Mucosa of descending colon (tissue), 3 donors: ENCODE measurements at regions of chr13 and their contacts with region 1.

Region 1: GRCh38 chr13:43567608-43568007 is 219.2 kb downstream of the ENOX1 start:
- DNase-seq: no peak
- ATAC-seq: no peak
- H3K4me3 ChIP-seq: no peak overlapping the region
- H3K4me1 ChIP-seq: no peaks in the 10 kb centered on the region
- CTCF ChIP-seq: no peak

Region 2: GRCh38 chr13:43258761-43259160 is 308.8 kb before region 1 on chr13:
- intact Hi-C with region 1: no loop called
- DNase-seq: no peak
- ATAC-seq: no peak
- H3K4me3 ChIP-seq: no peak overlapping the region
- H3K4me1 ChIP-seq: no peaks in the 10 kb centered on the region
- CTCF ChIP-seq: no peak

Region 3: DNA sequence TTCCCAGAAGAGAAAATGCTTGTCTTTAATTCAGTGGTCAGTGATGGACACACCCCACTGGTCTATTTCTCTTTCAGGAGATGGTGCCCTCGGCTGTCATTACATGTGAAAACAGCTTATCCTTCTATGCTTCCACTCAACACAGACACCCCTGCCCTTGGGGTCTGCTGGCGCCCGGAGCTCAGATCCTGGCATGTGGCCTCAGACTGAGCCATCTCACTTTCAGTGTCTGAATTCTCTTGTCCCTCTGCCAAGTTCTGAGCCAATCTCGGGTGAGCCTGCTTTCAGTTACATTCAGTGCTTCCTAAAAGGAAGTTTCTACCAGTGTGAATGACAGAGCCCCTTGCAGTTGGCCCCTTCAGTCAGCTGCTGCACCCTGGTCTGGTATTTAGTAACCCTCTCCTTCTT is 250.7 kb before region 1 on chr13:
- intact Hi-C with region 1: loop called in 1 of 2 experiments (anchors 10 kb)
- DNase-seq: peak in 2 of 3 donors; percentile 11 to 25
- ATAC-seq: no peak
- H3K4me3 ChIP-seq: no peak overlapping the region
- H3K4me1 ChIP-seq: no peaks in the 10 kb centered on the region
- CTCF ChIP-seq: no peak

Region 4: GRCh38 chr13:44465318-44465717 is 897.7 kb after region 1 on chr13:
- intact Hi-C with region 1: no loop called
- DNase-seq: no peak
- ATAC-seq: no peak
- H3K4me3 ChIP-seq: no peak overlapping the region
- H3K4me1 ChIP-seq: no peaks in the 10 kb centered on the region
- CTCF ChIP-seq: no peak